ENCODE measurements at regions of chr10 and their contacts with region 1.

Region 1: GRCh38 chr10:58291538-58292174 is 22.7 kb downstream of the CISD1 start:
- DNase-seq: peak in 22 of 35 experiments; percentile 2 to 68 (median 16)
- ATAC-seq: peak; percentile 43 to 71 (median 55)
- H3K4me3 ChIP-seq: no peak overlapping the region
- H3K4me3 Mint-ChIP-seq: no peak overlapping the region
- H3K27ac ChIP-seq: no peak overlapping the region
- H3K27ac Mint-ChIP-seq: no peak overlapping the region
- H3K4me1 ChIP-seq: no peaks in the 10 kb centered on the region
- H3K4me1 Mint-ChIP-seq: peaks cover 0 to 4% (median 0%) of the 10 kb centered on the region in 3 donors
- H3K27me3 ChIP-seq: no peaks in the 10 kb centered on the region
- H3K27me3 Mint-ChIP-seq: no peaks in the 10 kb centered on the region

Region 2: DNA sequence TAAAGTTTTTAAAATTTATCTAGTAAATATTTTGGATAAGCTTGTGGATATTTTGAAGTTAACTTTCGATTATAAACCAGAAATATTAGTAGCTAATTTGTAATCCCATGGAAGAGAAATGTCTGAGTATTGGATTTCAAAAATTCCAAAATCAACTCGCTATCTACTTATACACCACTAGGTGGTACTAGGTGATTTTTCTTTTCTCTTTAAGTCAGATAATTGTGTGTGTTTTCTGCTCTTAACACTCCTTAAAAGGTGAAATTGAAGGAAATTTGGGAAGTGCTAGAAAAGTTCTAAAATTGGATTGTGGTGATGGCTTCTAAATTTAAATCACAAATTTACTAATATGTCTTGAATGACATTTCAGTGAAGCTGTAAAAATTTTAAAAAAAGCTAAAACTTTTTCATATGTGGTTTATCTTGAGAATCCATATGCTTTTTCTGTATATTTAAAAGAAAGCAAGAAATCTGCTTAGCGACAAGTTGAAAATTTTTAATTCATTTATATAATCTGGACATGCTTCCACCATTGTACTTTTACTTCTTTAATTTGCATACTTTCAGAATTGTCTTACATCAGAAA is 114.2 kb before region 1 on chr10:
- CTCF ChIA-PET with region 1: interaction called, 79 to 85 read pairs
- POLR2A ChIA-PET with region 1: interaction called in 1 of 2 experiments, 3 read pairs
- DNase-seq: peak in 1 of 35 experiments; percentile 40
- ATAC-seq: no peak
- H3K4me3 ChIP-seq: no peak overlapping the region
- H3K4me3 Mint-ChIP-seq: no peak overlapping the region
- H3K27ac ChIP-seq: no peak overlapping the region
- H3K27ac Mint-ChIP-seq: no peak overlapping the region
- H3K4me1 ChIP-seq: no peaks in the 10 kb centered on the region
- H3K4me1 Mint-ChIP-seq: no peaks in the 10 kb centered on the region
- H3K27me3 ChIP-seq: no peaks in the 10 kb centered on the region
- H3K27me3 Mint-ChIP-seq: no peaks in the 10 kb centered on the region

Region 3: GRCh38 chr10:58268870-58269605 is 22.6 kb before region 1 on chr10 and contains the start of gene CISD1:
- CTCF ChIA-PET with region 1: interaction called, 3 to 15 read pairs
- POLR2A ChIA-PET with region 1: interaction called in 1 of 2 experiments, 4 read pairs
- DNase-seq: peak; percentile 79 to 99 (median 91)
- ATAC-seq: peak; percentile 72 to 73 (median 72)
- H3K4me3 ChIP-seq: peak within 1 kb of the TSS; percentile 54 to 98
- H3K4me3 Mint-ChIP-seq: peak within 1 kb of the TSS; percentile 94 to 99 (median 96)
- H3K27ac ChIP-seq: peak within 1 kb of the TSS; percentile 85
- H3K27ac Mint-ChIP-seq: peak within 1 kb of the TSS; percentile 91 to 94
- H3K4me1 ChIP-seq: peaks cover 21 to 29% of the 10 kb centered on the region in 2 experiments
- H3K4me1 Mint-ChIP-seq: peaks cover 43 to 57% (median 47%) of the 10 kb centered on the region in 3 donors
- H3K27me3 ChIP-seq: no peaks in the 10 kb centered on the region
- H3K27me3 Mint-ChIP-seq: no peaks in the 10 kb centered on the region
- total RNA-seq, gene CISD1: 6.3 to 11.3 (median 10.3) TPM

Region 4: DNA sequence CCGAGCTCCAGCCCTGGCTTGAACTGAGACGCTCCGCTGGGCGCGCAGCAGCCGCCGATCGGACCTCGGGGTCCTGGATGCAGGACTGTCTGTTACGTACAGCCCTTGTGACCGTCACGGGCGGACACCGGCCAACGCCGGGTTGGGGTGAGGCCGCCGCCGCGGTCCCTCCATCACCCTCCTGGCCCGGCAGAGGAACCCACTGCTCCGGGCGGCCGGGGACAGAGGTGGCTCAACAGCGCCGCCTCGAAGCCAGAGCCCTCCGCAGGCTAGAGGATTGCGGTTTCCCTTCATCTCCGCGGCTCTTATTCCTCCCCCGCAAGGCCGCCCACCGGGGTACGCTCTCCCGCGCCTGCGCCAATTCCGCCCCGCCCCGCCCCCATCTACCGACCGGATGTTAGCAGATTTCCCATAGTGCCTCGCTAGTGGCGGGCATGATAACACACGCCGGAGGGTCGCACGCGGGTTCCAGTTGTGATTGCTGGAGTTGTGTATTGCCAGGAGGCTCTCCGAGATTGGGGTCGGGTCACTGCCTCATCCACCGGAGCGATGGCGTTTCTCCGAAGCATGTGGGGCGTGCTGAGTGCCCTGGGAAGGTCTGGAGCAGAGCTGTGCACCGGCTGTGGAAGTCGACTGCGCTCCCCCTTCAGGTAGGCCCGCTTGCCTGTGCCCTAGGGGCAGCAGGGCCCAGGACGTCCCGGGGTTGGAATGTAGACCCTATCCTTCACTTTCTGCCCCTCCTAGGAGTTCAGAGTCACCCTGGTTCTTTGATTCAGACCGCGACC is 93.5 kb after region 1 on chr10 and contains the start of gene TFAM:
- CTCF ChIA-PET with region 1: interaction called, 3 to 5 read pairs
- POLR2A ChIA-PET with region 1: interaction called in 1 of 2 experiments, 10 read pairs
- DNase-seq: peak; percentile 86 to 99 (median 95)
- ATAC-seq: peak; percentile 85 to 93 (median 91)
- H3K4me3 ChIP-seq: peak within 1 kb of the TSS; percentile 77 to 96
- H3K4me3 Mint-ChIP-seq: peak within 1 kb of the TSS; percentile 97 to 98 (median 98)
- H3K27ac ChIP-seq: peak within 1 kb of the TSS; percentile 81
- H3K27ac Mint-ChIP-seq: peak within 1 kb of the TSS; percentile 93 to 95
- H3K4me1 ChIP-seq: peaks cover 21 to 32% of the 10 kb centered on the region in 2 experiments
- H3K4me1 Mint-ChIP-seq: peaks cover 56 to 60% (median 58%) of the 10 kb centered on the region in 3 donors
- H3K27me3 ChIP-seq: no peaks in the 10 kb centered on the region
- H3K27me3 Mint-ChIP-seq: no peaks in the 10 kb centered on the region
- total RNA-seq, gene TFAM: 35.9 to 41.8 (median 39.2) TPM